Activated CD8-positive, alpha-beta T cell treated with anti-CD3 and anti-CD28 coated beads, Interleukin-2, amount 10 ng/mL, durations not matched to agents 7 days and 5 days (primary cell): ENCODE measurements at regions of chr3 and their contacts with region 1.

Region 1: GRCh38 chr3:5057857-5058324 is 64.2 kb upstream of the ARL8B start:
- DNase-seq: peak; percentile 90
- ATAC-seq: peak; percentile 95
- H3K4me3 Mint-ChIP-seq: no peak overlapping the region
- H3K27ac Mint-ChIP-seq: no peak overlapping the region
- H3K4me1 Mint-ChIP-seq: peaks cover 59% of the 10 kb centered on the region
- H3K27me3 Mint-ChIP-seq: peaks cover 7% of the 10 kb centered on the region

Region 2: DNA sequence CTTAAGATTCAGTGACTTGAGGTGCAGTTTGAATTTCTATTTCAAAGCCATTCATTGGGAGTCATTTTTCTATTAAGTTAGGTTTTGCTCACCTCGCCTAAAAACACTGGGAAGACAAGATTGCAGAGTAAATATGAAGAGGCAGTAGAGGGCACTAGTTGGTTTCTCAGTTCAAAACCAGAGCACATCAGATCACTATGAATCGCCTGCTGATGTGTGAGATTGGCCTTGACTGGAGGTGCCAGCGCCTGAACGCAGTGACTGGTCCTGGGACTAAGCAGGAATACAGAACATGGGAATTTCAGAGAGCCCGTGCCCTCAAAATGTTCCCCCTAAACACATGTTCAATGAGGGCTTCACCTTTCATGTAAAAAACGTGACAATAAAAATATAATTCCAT is 335.8 kb before region 1 on chr3:
- CTCF ChIA-PET with region 1: interaction called, 19 read pairs
- POLR2A ChIA-PET with region 1: no interaction called
- DNase-seq: peak; percentile 61
- ATAC-seq: peak; percentile 85
- H3K4me3 Mint-ChIP-seq: no peak overlapping the region
- H3K27ac Mint-ChIP-seq: peak overlapping the region; percentile 66
- H3K4me1 Mint-ChIP-seq: peaks cover 62% of the 10 kb centered on the region
- H3K27me3 Mint-ChIP-seq: no peaks in the 10 kb centered on the region

Region 3: GRCh38 chr3:4826237-4827100 is 231.4 kb before region 1 on chr3:
- CTCF ChIA-PET with region 1: interaction called, 12 read pairs
- POLR2A ChIA-PET with region 1: interaction called, 4 read pairs
- DNase-seq: no peak
- ATAC-seq: no peak
- H3K4me3 Mint-ChIP-seq: peak overlapping the region; percentile 78
- H3K27ac Mint-ChIP-seq: peak overlapping the region; percentile 86
- H3K4me1 Mint-ChIP-seq: peaks cover 94% of the 10 kb centered on the region
- H3K27me3 Mint-ChIP-seq: no peaks in the 10 kb centered on the region

Region 4: DNA sequence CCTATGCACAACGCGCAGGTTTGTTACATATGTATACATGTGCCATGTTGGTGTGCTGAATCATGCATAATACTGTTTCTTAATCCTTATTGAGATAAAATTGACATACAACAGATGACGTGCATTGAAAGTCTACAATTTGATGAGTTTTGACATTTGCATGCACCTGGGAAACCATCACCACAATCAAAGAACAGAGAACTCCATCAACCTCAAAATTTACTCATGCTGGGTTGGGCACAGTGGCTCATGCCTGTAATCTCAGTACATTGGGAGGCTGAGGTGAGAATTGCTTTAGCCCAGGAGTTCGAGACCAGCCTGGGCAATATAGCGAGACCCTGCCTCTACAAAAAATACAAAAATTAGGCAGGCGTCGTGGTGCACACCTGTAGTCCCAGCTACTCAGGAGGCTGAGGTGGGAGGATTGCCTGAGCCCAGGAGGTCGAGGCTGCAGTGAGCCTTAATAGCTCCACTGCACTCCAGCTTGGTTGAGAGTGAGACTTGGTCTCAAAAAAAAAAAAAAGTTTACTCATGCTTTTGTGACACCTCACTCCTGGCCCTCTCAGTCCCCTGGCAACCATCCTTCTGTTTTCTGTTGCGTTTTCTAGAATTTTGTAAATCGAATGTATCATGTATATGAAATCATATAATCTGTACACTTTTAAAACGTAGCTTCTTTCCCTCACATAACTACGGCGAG is 22.0 kb before region 1 on chr3:
- CTCF ChIA-PET with region 1: interaction called, 71 read pairs
- POLR2A ChIA-PET with region 1: no interaction called
- DNase-seq: no peak
- ATAC-seq: no peak
- H3K4me3 Mint-ChIP-seq: no peak overlapping the region
- H3K27ac Mint-ChIP-seq: no peak overlapping the region
- H3K4me1 Mint-ChIP-seq: peaks cover 57% of the 10 kb centered on the region
- H3K27me3 Mint-ChIP-seq: no peaks in the 10 kb centered on the region

Region 5: DNA sequence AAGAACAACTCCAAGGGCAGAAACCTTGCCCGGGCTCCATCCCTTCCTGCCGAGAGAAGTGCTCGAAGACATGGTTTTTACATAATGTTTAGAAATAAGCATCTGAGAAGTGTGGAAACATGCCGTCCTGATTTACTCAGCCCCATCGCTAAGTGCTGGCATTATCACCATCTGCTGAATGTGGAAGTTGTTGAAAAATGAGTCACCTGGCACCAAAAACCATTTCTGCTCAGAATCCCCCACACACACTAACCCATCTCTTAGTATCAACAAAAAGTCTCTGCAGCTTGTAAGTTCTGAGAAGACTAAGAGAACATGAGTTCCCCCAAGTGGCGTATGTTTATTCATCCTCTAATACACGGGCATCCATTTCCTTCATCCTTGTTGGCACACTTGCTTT is 13.2 kb after region 1 on chr3:
- CTCF ChIA-PET with region 1: no interaction called
- POLR2A ChIA-PET with region 1: no interaction called
- DNase-seq: no peak
- ATAC-seq: no peak
- H3K4me3 Mint-ChIP-seq: no peak overlapping the region
- H3K27ac Mint-ChIP-seq: no peak overlapping the region
- H3K4me1 Mint-ChIP-seq: peaks cover 2% of the 10 kb centered on the region
- H3K27me3 Mint-ChIP-seq: peaks cover 31% of the 10 kb centered on the region